PC-9 (cell line): ENCODE measurements at regions of chr14 and their contacts with region 1.

Region 1: DNA sequence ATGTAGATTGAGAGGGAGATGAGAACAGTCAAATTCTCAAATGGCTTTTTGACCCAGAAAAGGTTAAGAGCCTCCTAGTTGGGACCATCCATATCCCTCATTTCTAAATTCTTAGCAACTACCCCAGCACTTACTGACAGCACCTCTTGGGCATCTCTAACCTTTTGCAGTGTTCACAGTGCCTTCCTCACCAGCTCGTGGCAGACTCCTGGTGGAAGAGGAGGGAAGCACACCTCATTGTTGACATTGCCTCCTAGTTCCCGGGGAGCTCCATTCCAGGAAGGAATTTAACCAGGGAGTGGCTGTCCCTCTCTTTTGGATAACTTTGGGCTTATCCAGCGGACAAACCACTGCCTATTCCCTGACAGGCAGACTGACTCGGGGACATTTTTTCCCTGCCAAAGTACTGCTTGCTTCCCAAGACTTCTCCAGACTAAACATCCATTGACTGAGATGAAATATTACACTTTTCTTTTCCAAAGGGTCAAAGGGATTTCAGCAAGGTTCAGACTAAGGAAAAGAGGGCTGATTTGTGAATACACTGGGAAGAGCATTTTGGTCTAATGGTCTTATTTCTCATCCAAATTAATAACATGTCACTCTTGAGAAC is 9.0 kb upstream of the OR6J1 start:
- DNase-seq: peak; percentile 62 to 68
- H3K4me3 ChIP-seq: no peak overlapping the region
- H3K27ac ChIP-seq: no peak overlapping the region
- H3K4me1 ChIP-seq: peaks cover 36% of the 10 kb centered on the region
- H3K27me3 ChIP-seq: no peaks in the 10 kb centered on the region
- CTCF ChIP-seq: peak; percentile 77

Region 2: GRCh38 chr14:22715186-22715812 is 62.2 kb after region 1 on chr14:
- CTCF ChIA-PET with region 1: interaction called, 7 read pairs
- POLR2A ChIA-PET with region 1: no interaction called
- intact Hi-C with region 1: loop called (anchors 10 kb)
- DNase-seq: no peak
- H3K4me3 ChIP-seq: no peak overlapping the region
- H3K27ac ChIP-seq: no peak overlapping the region
- H3K4me1 ChIP-seq: no peaks in the 10 kb centered on the region
- H3K27me3 ChIP-seq: no peaks in the 10 kb centered on the region
- CTCF ChIP-seq: no peak

Region 3: DNA sequence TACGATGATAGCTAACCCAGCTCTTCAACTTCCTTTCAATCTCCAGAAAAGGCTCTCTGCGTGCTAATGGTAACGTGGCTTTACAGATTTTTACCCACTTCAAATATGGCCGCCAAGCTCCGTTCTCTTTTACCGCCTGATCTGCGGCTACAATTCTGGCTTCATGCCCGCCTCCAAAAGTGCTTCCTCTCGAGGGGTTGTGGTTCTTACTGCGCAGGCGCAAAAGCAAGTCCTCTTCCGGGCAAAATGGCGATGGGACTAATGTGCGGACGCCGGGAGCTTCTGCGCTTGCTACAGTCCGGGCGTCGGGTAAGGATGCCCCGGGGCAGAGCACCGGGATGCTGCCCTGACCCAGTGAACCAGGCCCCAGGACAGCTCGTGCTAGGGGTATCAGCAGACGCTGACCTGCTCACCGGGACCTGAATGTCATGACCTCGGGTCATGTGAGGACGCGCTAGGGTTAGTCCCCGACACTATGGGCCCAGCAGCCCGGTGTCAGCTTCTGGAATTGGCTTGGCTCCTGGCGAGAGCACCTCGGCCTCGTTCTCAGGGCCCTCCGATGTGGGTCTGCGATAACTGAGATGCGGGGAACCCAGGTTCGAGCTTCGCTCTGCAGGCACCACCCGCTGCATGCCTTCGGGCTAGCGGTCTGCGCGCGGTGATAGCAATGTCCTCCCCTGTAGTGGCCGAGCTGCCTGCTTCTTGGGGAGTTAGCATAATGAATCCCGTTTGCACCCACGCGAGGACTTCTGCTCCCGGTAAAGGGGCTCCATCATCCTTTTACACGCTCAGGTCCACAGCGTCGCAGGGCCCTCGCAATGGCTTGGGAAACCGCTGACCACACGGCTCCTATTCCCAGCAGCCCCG is 113.6 kb after region 1 on chr14 and contains the start of gene OXA1L:
- CTCF ChIA-PET with region 1: interaction called, 5 read pairs
- POLR2A ChIA-PET with region 1: interaction called, 5 read pairs
- intact Hi-C with region 1: loop called (anchors 5 kb)
- DNase-seq: peak; percentile 83 to 88
- H3K4me3 ChIP-seq: peak within 1 kb of the TSS; percentile 96
- H3K27ac ChIP-seq: peak within 1 kb of the TSS; percentile 91
- H3K4me1 ChIP-seq: peaks cover 7% of the 10 kb centered on the region
- H3K27me3 ChIP-seq: no peaks in the 10 kb centered on the region
- CTCF ChIP-seq: no peak
- total RNA-seq, gene OXA1L: 65.2 and 70.9 TPM in 2 replicates

Region 4: DNA sequence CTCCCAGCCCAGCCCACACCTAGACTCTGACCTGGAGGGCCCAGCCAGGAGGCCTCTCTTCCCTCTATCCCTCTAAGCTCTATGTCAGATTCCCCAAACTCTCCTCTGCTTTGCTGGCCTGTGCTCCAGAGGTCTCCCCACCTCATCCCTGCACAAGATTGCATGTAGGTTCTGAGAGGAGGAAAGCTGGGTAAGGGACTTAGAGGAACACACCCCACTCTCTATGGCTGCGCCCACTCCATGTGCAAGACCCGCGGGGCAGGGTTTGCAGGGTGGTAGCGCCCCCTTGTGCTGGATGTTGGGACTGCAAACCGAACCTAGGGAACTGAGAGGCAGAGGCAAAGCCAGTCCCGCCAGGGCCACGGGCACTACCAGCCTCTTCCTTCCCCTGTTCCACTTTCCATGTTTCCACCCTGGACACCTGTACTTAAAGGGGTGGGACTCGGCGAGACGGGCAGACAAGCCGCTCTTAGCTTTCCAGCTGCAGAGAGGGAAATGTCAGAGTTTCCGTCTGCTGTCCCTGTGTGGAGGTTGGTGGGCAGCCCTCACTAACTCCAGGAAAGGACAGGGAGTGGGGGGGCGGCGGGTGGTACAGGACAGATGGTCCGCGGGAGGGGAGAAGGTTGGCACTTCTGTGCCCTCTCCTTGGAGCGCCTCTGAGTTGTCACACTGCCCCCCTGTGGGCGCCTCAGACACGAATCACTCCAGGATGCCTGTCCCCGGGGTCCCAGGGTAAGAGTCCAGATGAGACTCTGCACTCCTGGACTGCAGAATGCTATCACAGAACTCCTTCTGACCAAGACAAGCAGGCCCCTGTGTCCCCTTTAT is 200.0 kb after region 1 on chr14:
- CTCF ChIA-PET with region 1: interaction called, 5 read pairs
- POLR2A ChIA-PET with region 1: no interaction called
- intact Hi-C with region 1: loop called (anchors 2 kb)
- DNase-seq: peak in 1 of 2 experiments; percentile 80
- H3K4me3 ChIP-seq: peak overlapping the region; percentile 48; the same call in 1 of the 2 replicates
- H3K27ac ChIP-seq: no peak overlapping the region
- H3K4me1 ChIP-seq: peaks cover 4% of the 10 kb centered on the region; the same call in 1 of the 2 replicates
- H3K27me3 ChIP-seq: no peaks in the 10 kb centered on the region
- CTCF ChIP-seq: peak; percentile 91

Region 5: GRCh38 chr14:22900081-22900799 is 247.1 kb after region 1 on chr14:
- CTCF ChIA-PET with region 1: no interaction called
- POLR2A ChIA-PET with region 1: no interaction called
- intact Hi-C with region 1: loop called (anchors 2 kb)
- DNase-seq: peak; percentile 24 to 41
- H3K4me3 ChIP-seq: no peak overlapping the region
- H3K27ac ChIP-seq: no peak overlapping the region
- H3K4me1 ChIP-seq: peaks cover 15% of the 10 kb centered on the region
- H3K27me3 ChIP-seq: no peaks in the 10 kb centered on the region
- CTCF ChIP-seq: peak; percentile 62